Panc1 (cell line): ENCODE measurements at regions of chr14 and their contacts with region 1.

Region 1: DNA sequence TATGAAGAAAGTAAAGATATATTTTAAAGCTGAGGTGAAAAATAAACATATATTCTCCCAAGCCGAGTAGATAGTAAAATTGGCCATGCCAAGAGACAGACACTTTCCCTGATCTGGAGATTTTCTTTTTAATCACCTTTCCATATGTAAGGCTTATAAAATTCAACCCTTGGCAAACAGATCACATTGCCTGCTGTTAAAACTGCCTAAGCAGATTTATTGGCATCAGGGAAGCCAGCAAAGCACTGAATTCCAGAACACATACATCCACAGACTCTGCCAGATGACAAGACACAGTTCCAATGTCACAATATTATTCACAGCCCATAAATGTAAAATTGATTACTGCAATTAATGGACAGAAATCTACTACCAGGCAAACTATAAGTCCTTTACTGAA is 78.2 kb upstream of the GARIN2 start:
- DNase-seq: no peak
- ATAC-seq: no peak
- H3K4me3 ChIP-seq: no peak overlapping the region
- H3K27ac ChIP-seq: no peak overlapping the region
- H3K4me1 ChIP-seq: no peaks in the 10 kb centered on the region
- H3K27me3 ChIP-seq: no peaks in the 10 kb centered on the region
- CTCF ChIP-seq: no peak

Region 2: DNA sequence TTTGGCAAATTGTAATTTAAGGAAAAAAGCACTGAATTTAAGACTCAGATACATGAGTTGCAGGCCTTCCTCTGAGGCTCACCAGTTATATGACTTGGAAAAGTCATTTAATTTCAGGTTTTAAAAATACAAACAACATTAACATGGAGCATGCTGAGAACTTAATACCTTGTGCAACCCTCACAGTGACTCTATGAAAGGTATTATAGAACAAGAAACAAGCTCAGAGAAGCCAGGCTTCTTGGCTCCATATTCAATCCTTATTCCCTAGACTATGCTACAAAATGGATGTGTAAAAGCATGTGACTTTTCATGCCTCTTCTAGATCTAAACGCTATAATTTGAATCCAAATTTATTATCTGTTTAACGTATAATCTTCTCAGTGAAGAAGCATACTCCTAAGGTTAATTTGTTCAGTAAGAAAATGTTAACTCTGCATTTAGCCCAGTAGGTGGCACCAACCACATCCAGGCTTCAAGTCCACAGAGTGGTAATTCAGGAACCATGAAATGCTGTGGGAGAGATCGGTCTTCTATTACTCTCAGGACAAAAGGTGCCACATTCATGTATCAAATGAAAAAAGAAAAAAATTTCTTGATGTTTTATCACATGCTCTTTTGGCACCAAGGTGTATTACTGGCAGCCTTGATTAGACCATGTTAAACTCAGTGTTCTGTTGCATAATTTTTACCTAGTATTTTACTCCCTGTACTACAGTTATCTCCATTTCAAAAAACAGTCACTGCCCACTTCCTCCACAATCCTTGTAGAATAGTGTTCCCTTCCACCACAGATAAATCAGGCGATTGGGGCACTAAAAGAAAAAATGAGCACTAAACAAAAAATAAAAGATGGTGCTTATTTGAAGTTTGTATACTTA is 615.6 kb before region 1 on chr14:
- CTCF ChIA-PET with region 1: no interaction called
- POLR2A ChIA-PET with region 1: no interaction called
- in situ Hi-C with region 1: no loop called
- intact Hi-C with region 1: loop called (anchors 10 kb)
- DNase-seq: no peak
- ATAC-seq: peak; percentile 93
- H3K4me3 ChIP-seq: no peak overlapping the region
- H3K27ac ChIP-seq: no peak overlapping the region
- H3K4me1 ChIP-seq: peaks cover 2% of the 10 kb centered on the region; the same call in 1 of the 2 replicates
- H3K27me3 ChIP-seq: no peaks in the 10 kb centered on the region
- CTCF ChIP-seq: peak; percentile 77

Region 3: GRCh38 chr14:66624299-66624937 is 486.6 kb before region 1 on chr14:
- CTCF ChIA-PET with region 1: no interaction called
- POLR2A ChIA-PET with region 1: no interaction called
- in situ Hi-C with region 1: no loop called
- intact Hi-C with region 1: loop called (anchors 10 kb)
- DNase-seq: peak; percentile 33
- ATAC-seq: peak; percentile 94
- H3K4me3 ChIP-seq: no peak overlapping the region
- H3K27ac ChIP-seq: no peak overlapping the region; the same call in 1 of the 2 replicates
- H3K4me1 ChIP-seq: 0 out of 2 replicates have a peak, but pooled peaks cover 4% of the 10 kb centered on the region
- H3K27me3 ChIP-seq: no peaks in the 10 kb centered on the region
- CTCF ChIP-seq: peak; percentile 77